A673 (cell line): ENCODE measurements at regions of chr5 and their contacts with region 1.

Region 1: GRCh38 chr5:52657247-52657645 is 130.5 kb upstream of the ITGA1 start:
- DNase-seq: peak; percentile 77
- H3K4me3 ChIP-seq: peak overlapping the region; percentile 8
- H3K27ac ChIP-seq: peak overlapping the region; percentile 37
- H3K4me1 ChIP-seq: peaks cover 13% of the 10 kb centered on the region
- H3K27me3 ChIP-seq: no peaks in the 10 kb centered on the region
- CTCF ChIP-seq: peak; percentile 58

Region 2: DNA sequence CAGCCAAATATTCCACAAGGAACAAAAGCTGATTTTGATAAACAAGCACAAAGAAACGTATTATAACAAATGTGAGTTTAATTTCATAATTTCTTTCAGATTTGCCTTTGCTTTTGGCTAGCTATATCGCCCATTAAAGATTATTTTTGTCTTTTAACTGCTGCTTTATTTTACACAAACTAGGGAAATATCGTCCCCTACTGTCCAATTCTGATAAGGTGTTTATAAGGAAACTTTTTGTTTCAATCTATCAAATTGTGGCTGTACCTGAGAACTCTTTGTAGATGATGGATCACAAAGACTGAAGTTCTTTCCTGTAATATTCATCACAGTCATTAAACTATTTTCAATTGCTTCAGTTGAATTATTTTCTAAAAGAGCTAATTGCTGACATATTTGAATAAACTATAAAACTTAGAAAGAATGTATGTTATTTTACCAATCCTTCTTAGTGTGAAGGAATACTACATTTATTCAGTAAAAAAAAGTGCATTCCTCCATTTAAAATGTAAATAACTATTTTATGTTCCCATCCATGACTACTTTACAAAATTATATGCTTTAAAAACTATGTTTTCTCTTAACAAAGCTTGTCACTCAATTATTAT is 300.8 kb before region 1 on chr5:
- CTCF ChIA-PET with region 1: no interaction called
- POLR2A ChIA-PET with region 1: no interaction called
- intact Hi-C with region 1: loop called (anchors 5 kb)
- DNase-seq: peak; percentile 73
- H3K4me3 ChIP-seq: no peak overlapping the region
- H3K27ac ChIP-seq: peak overlapping the region; percentile 43
- H3K4me1 ChIP-seq: peaks cover 17% of the 10 kb centered on the region
- H3K27me3 ChIP-seq: no peaks in the 10 kb centered on the region
- CTCF ChIP-seq: peak; percentile 85

Region 3: DNA sequence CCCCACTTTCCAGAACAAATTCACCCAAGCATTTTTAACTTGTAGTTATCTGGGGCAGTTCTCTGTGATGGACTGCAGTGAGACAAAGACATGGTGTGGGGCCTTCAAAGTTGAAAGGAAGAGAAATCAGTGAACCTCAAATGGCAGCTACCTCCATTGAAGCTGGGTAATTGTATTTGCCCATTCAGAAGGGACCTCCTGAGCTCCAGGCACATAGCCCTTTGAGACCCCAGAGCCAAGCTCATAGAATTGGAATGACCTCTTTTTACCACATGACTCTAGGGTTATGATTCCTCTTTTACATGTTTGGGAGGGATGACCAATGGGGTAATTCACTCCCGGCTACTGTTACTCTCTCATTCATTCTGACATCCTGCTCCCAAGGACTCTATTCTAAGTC is 237.9 kb before region 1 on chr5:
- CTCF ChIA-PET with region 1: no interaction called
- POLR2A ChIA-PET with region 1: no interaction called
- intact Hi-C with region 1: loop called (anchors 10 kb)
- DNase-seq: no peak
- H3K4me3 ChIP-seq: no peak overlapping the region
- H3K27ac ChIP-seq: no peak overlapping the region
- H3K4me1 ChIP-seq: peaks cover 24% of the 10 kb centered on the region
- H3K27me3 ChIP-seq: no peaks in the 10 kb centered on the region
- CTCF ChIP-seq: no peak

Region 4: GRCh38 chr5:52560366-52560765 is 96.9 kb before region 1 on chr5:
- CTCF ChIA-PET with region 1: no interaction called
- POLR2A ChIA-PET with region 1: no interaction called
- intact Hi-C with region 1: loop called (anchors 5 kb)
- DNase-seq: peak; percentile 80
- H3K4me3 ChIP-seq: no peak overlapping the region
- H3K27ac ChIP-seq: no peak overlapping the region
- H3K4me1 ChIP-seq: peaks cover 26% of the 10 kb centered on the region
- H3K27me3 ChIP-seq: no peaks in the 10 kb centered on the region
- CTCF ChIP-seq: peak; percentile 50

Region 5: DNA sequence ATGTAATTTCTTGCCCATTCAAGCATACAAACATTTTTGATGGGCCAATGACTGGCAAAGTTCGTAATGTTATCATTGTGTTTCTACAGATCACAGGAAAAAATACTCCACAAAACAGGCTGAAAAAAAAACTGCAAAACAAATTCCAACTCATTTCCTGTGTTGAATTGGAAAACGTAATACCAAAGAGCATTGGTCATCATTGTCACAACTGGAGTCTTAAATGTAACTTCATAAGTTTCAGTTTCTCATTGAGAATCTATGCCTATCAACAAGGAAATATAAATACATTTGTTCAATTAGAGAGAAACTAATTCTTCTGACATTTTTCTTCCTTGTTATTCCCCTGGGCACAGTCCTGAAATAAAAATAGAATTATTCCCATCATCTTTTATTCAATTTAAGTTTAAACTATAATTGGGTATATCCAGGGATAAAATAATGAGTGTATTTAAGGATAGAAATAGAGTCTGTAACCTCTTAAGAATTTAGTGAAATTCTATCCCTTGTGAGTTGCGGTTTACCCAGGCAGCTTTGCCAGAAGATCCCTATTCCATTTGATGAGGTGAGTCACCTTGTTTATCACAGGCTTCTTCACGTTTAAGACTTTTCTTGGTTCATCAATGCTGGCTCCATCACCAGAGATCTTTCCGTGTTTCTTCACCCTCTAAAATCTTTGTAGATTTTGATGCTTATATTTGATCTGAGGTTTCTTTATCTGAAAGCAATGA is 17.7 kb after region 1 on chr5:
- CTCF ChIA-PET with region 1: no interaction called
- POLR2A ChIA-PET with region 1: no interaction called
- intact Hi-C with region 1: no loop called
- DNase-seq: no peak
- H3K4me3 ChIP-seq: no peak overlapping the region
- H3K27ac ChIP-seq: no peak overlapping the region
- H3K4me1 ChIP-seq: no peaks in the 10 kb centered on the region
- H3K27me3 ChIP-seq: no peaks in the 10 kb centered on the region
- CTCF ChIP-seq: no peak

Region 6: DNA sequence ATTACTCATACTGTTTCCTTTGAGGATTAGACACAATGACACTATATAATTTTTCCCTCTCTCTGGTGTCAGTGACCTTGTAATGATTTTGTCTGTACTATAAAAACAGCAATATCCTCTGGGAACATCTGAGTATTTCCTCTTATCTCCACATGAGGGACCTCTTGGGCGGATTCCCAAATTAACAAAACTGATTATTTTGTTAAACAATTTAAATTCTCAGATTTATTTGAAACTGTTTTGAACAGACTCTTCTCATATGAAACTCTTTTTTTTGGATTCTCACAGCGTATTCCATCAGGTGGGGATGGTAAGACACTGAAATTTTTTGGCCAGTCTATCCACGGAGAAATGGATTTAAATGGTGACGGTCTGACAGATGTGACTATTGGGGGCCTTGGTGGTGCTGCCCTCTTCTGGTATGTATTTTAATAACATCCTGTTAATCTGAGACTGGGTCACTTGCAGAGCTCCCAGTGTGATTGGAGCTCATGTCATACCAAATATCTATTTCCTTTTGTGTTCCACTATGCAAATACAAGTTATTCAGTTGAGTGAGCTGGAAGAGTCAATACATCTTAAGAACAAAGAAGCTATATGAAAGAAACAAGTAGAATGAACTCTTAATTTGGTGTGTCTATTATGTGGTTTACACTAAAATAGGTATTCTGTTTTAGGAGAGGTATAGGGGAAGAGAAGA is 258.1 kb after region 1 on chr5:
- CTCF ChIA-PET with region 1: no interaction called
- POLR2A ChIA-PET with region 1: no interaction called
- intact Hi-C with region 1: loop called (anchors 5 kb)
- DNase-seq: peak; percentile 80
- H3K4me3 ChIP-seq: peak overlapping the region; percentile 41
- H3K27ac ChIP-seq: no peak overlapping the region
- H3K4me1 ChIP-seq: no peaks in the 10 kb centered on the region
- H3K27me3 ChIP-seq: no peaks in the 10 kb centered on the region
- CTCF ChIP-seq: peak; percentile 90